ENCODE measurements at regions of chr1 and their contacts with region 1.

Region 1: DNA sequence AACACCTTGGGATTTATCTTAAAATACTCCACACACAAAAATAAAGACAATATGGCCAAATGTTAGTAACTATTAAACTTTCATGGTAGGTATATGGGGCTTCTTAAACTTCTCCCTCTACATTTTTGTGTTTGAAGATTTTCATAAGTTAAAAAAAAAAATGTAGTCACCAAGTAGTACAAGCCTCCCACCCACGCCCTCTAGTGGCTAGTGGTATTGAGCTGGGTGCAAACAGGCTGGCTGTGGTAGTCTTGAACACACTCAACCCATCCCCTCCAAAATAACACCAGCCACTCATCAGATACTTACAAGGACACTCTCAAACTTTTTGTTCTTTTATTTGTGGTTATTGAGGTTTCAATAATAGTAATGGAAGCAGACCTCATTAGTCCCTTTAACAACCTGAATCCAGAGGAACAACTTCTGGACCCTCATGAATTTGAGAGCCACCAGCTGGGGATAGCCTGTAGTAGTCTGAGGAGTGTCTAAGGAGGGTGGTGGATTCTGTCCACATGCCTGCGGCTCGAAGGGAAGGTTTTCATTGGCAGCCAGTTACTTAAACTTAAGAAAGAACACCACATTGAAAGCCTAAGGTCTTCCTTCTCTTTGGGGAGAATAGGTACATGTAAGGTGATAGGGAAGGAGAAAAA is 15.6 kb downstream of the RD3 start:
- DNase-seq: peak; percentile 64
- H3K4me3 Mint-ChIP-seq: no peak overlapping the region
- H3K27ac Mint-ChIP-seq: no peak overlapping the region
- H3K4me1 Mint-ChIP-seq: no peaks in the 10 kb centered on the region
- H3K27me3 Mint-ChIP-seq: peaks cover 27% of the 10 kb centered on the region

Region 2: DNA sequence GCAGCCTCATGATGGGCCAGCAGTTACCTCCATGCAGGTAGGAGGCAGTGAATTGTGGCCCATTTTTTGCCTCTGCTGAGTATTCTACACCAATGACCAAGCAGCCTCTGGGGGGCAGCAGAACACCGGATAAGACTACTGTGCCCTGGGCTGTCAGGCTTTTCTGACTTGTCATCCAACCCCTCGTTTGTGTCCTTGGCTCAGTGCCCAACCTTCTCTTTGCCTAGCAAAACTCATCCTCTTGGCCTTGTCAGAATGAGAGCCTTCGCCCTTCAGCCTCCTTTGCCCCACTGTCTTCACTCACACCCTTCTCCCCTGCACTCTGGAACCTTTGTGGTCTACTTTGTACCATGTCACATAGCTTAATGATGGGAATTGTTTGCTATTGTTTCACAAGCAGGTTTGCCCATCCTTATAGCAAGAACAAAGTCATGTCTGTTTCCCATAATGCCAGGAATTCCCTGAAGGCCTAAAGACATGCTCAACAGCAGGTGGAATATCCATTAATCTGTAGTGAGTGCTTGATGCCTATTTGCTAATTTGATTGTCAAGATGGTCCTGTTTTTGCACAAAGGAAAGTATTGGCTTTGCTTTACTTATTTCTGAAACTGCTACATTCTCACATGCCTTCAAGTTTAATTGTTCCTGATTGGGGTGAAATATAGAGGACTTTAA is 891.7 kb before region 1 on chr1:
- intact Hi-C with region 1: loop called (anchors 2 kb)
- DNase-seq: peak; percentile 37
- H3K4me3 Mint-ChIP-seq: no peak overlapping the region
- H3K27ac Mint-ChIP-seq: no peak overlapping the region
- H3K4me1 Mint-ChIP-seq: peaks cover 9% of the 10 kb centered on the region
- H3K27me3 Mint-ChIP-seq: no peaks in the 10 kb centered on the region

Region 3: GRCh38 chr1:211133836-211134669 is 342.3 kb before region 1 on chr1 and contains the start of gene KCNH1:
- intact Hi-C with region 1: loop called (anchors 10 kb)
- DNase-seq: peak; percentile 54
- H3K4me3 Mint-ChIP-seq: peak within 1 kb of the TSS; percentile 50
- H3K27ac Mint-ChIP-seq: no peak within 1 kb of the TSS
- H3K4me1 Mint-ChIP-seq: no peaks in the 10 kb centered on the region
- H3K27me3 Mint-ChIP-seq: peaks cover 70% of the 10 kb centered on the region
- total RNA-seq, gene KCNH1: not detected in 2 replicates

Region 4: GRCh38 chr1:211281320-211282022 is 194.9 kb before region 1 on chr1:
- intact Hi-C with region 1: loop called (anchors 5 kb)
- DNase-seq: no peak
- H3K4me3 Mint-ChIP-seq: no peak overlapping the region
- H3K27ac Mint-ChIP-seq: no peak overlapping the region
- H3K4me1 Mint-ChIP-seq: no peaks in the 10 kb centered on the region
- H3K27me3 Mint-ChIP-seq: no peaks in the 10 kb centered on the region

Region 5: GRCh38 chr1:211382714-211383480 is 93.4 kb before region 1 on chr1:
- intact Hi-C with region 1: loop called (anchors 1 kb)
- DNase-seq: peak; percentile 77
- H3K4me3 Mint-ChIP-seq: peak overlapping the region; percentile 91
- H3K27ac Mint-ChIP-seq: peak overlapping the region; percentile 89
- H3K4me1 Mint-ChIP-seq: peaks cover 51% of the 10 kb centered on the region
- H3K27me3 Mint-ChIP-seq: peaks cover 8% of the 10 kb centered on the region

Region 6: DNA sequence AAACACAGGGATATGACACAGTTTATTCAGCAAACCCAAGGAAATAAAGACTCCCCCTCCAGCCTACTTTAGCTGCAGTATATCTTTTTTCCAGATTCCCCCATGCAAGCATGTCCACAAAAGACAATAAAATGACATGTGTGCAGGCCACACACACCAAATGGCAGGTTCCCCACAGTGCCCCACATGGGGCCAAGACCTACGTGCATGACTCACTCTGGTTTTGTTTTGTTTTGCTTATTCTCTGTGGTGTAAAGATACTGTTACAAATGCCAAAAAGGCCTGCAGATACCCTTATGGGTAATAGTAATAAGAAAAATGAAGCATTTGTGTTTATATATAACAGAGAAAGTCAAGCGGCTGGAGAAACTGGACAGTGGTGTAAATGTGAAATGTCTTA is 55.9 kb before region 1 on chr1:
- intact Hi-C with region 1: loop called (anchors 2 kb)
- DNase-seq: peak; percentile 5
- H3K4me3 Mint-ChIP-seq: no peak overlapping the region
- H3K27ac Mint-ChIP-seq: peak overlapping the region; percentile 6
- H3K4me1 Mint-ChIP-seq: peaks cover 28% of the 10 kb centered on the region
- H3K27me3 Mint-ChIP-seq: peaks cover under 1% of the 10 kb centered on the region

Region 7: GRCh38 chr1:211654838-211655787 is 178.8 kb after region 1 on chr1:
- intact Hi-C with region 1: loop called (anchors 1 kb)
- DNase-seq: peak; percentile 63
- H3K4me3 Mint-ChIP-seq: no peak overlapping the region
- H3K27ac Mint-ChIP-seq: no peak overlapping the region
- H3K4me1 Mint-ChIP-seq: peaks cover 6% of the 10 kb centered on the region
- H3K27me3 Mint-ChIP-seq: peaks cover 3% of the 10 kb centered on the region